Aorta (tissue), 5 donors: ENCODE measurements at regions of chr20 and their contacts with region 1.

Region 1: GRCh38 chr20:46945465-46945864 is 50.8 kb downstream of the EYA2 start:
- DNase-seq: no peak
- ATAC-seq: no peak
- H3K4me3 ChIP-seq: no peak overlapping the region
- H3K27ac ChIP-seq: no peak overlapping the region
- H3K4me1 ChIP-seq: peaks cover 5% of the 10 kb centered on the region in 2 donors
- H3K27me3 ChIP-seq: no peaks in the 10 kb centered on the region

Region 2: GRCh38 chr20:46894971-46895905 is 50.2 kb before region 1 on chr20:
- intact Hi-C with region 1: loop called in 1 of 2 experiments (anchors 5 kb)
- DNase-seq: peak; percentile 48 to 78
- ATAC-seq: peak; percentile 39
- H3K4me3 ChIP-seq: peak overlapping the region; percentile 57 to 58
- H3K27ac ChIP-seq: no peak overlapping the region
- H3K4me1 ChIP-seq: no peaks in the 10 kb centered on the region
- H3K27me3 ChIP-seq: peaks cover 0 to 2% of the 10 kb centered on the region in 2 donors

Region 3: DNA sequence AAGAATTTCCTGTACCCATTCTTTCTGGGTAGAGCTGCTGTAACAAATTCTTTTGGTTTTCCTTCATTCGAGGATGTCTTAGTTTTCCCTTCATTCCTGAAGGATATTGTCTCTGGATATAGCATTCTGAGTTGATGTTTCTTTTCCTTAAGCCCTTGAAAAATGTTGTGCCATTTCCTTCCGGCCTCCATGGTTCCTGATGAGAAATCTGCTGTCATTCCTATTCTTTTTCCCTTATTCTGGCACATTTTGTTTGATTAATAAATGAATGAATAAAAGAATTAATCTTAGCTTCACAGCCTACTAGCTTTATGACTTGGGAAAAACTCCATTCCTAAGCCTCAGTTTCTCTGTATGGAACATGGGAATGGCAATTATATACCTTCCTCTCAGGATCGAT is 122.3 kb after region 1 on chr20:
- intact Hi-C with region 1: no loop called
- DNase-seq: no peak
- ATAC-seq: no peak
- H3K4me3 ChIP-seq: no peak overlapping the region
- H3K27ac ChIP-seq: no peak overlapping the region
- H3K4me1 ChIP-seq: no peaks in the 10 kb centered on the region
- H3K27me3 ChIP-seq: no peaks in the 10 kb centered on the region